A549 (cell line): ENCODE measurements at regions of chr20 and their contacts with region 1.

Region 1: DNA sequence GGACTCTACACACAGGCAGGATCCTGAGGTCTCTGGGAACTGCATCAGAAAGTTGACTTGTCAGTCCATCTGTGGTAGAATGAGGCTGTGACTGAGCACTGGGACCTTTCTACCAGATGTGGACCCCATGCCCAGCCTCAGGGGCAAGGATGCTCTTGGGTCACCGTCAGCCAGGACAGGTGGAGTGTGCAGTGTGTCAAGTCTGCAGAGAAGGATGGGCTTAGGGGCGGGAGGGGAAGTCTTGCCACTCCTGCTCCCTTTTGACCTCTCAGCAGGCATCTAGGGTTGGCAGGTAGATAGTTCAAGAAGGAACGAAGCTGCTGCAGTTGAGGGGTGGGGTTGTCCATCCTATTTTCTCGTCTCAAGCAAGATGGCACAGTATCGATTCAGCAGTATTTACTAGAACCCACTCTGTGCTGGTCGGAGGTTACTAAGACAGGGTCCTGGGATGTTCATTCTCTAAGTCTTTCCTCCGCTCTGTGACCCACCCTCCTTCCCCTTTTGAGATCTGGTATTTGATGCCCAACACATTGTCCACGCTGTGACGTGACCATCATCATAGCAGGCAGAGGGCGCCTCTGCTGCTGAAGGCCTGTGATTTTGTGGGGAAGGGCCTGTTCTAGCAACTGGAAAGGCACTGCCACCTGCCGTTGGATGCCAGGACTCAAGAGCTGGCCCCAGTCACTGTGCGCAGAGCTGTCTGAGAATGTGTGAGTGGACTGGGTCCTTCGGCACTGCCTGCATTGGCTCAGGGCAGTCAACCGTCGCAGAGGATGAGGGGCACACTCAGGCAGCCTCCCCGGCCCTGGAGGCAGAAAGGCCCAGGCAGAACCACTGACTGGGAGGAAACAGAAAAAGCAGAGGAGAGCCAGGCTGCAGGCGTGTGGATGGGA is 23.2 kb downstream of the RBCK1 start:
- DNase-seq: peak; percentile 94 to 95
- ATAC-seq: peak; percentile 70 to 93
- H3K4me3 ChIP-seq: no peak overlapping the region
- H3K27ac ChIP-seq: peak overlapping the region; percentile 27 to 73; a peak in 5 of 6 replicates
- H3K4me1 ChIP-seq: peaks cover 16% of the 10 kb centered on the region
- CTCF ChIP-seq: peak; percentile 99
- EP300 ChIP-seq: no peak
- POLR2A ChIP-seq: no peak
- RAD21 ChIP-seq: peak; percentile 95 to 98

Region 2: GRCh38 chr20:407133-407952 is 23.9 kb before region 1 on chr20:
- CTCF ChIA-PET with region 1: interaction called, 31 read pairs
- POLR2A ChIA-PET with region 1: interaction called, 9 read pairs
- DNase-seq: peak; percentile 91
- ATAC-seq: peak; percentile 87
- H3K4me3 ChIP-seq: peak overlapping the region; percentile 48
- H3K27ac ChIP-seq: peak overlapping the region; percentile 93 to 99
- H3K4me1 ChIP-seq: peaks cover 31% of the 10 kb centered on the region
- CTCF ChIP-seq: peak; percentile 47
- EP300 ChIP-seq: no peak
- POLR2A ChIP-seq: peak; percentile 74
- RAD21 ChIP-seq: peak; percentile 26 to 54; a peak in 4 of 5 replicates

Region 3: DNA sequence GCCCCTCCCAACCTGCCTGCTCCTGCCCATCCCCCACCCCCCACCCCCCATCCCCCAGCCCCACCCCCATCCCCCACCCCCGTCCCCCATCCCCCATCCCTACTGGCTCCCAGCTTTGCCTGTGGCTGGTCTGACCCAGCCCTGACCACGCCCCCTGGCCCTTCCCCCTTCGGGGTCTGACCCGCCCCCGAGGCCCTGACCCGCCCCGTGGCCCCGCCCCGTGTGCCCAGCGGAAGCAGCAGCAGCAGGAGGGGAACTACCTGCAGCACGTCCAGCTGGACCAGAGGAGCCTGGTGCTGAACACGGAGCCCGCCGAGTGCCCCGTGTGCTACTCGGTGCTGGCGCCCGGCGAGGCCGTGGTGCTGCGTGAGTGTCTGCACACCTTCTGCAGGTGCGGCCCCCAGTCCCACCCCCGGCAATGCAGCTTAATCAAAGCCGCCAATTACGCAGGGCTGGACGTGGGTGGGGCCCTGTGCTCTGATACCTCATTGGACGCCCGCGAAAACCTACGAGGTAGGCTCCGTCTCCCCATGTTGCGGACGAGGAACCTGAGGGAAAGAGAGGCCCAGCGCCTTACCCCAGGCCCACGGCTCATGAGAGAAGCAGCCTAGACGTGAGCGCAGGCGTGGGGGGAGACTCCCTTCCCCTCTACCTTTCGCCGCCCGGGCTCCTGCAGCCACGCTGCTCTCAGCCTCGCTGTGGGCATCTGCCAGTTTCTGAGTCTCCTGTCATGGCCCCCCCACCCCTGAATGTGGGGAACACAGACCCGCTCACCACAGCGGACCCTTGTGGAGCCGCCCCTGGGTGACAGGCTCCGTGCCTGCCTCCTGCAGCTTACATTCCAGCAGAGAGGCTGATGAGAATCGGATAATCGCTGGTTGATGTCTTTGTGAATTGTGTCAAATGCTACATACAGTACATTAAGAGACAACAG is 10.3 kb before region 1 on chr20:
- CTCF ChIA-PET with region 1: interaction called, 56 read pairs
- POLR2A ChIA-PET with region 1: no interaction called
- DNase-seq: peak; percentile 63 to 70
- ATAC-seq: peak; percentile 11 to 69; a peak in 3 of 6 replicates
- H3K4me3 ChIP-seq: no peak overlapping the region
- H3K27ac ChIP-seq: peak overlapping the region in 1 of 2 experiments; percentile 59; a peak in 3 of 6 replicates
- H3K4me1 ChIP-seq: peaks cover 21% of the 10 kb centered on the region
- CTCF ChIP-seq: no peak
- EP300 ChIP-seq: no peak
- POLR2A ChIP-seq: no peak
- RAD21 ChIP-seq: no peak

Region 4: DNA sequence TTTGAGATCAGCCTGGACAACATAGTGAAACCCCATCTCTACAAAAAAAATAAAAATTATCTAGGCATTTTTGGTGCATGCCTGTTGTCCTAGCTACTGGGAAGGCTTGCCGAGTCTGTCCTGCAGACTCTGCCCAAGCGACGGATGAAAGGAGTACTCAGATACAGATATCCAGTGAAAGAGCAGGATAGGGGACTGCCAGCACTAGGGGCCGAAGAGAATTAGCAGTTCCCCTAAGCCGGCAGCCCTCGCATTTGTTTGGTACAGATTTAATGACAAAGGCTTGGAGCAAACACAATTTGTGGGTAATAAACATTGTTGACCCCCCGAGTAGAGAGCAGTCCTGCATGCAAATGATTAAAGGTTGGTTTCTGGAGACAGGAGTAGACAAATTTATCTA is 36.5 kb after region 1 on chr20:
- CTCF ChIA-PET with region 1: interaction called, 16 read pairs
- POLR2A ChIA-PET with region 1: no interaction called
- DNase-seq: no peak
- ATAC-seq: no peak
- H3K4me3 ChIP-seq: no peak overlapping the region
- H3K27ac ChIP-seq: no peak overlapping the region
- H3K4me1 ChIP-seq: peaks cover 5% of the 10 kb centered on the region; the same call in 2 of the 3 replicates
- CTCF ChIP-seq: no peak
- EP300 ChIP-seq: no peak
- POLR2A ChIP-seq: no peak
- RAD21 ChIP-seq: no peak

Region 5: GRCh38 chr20:478949-479429 is 47.7 kb after region 1 on chr20:
- CTCF ChIA-PET with region 1: interaction called, 50 read pairs
- POLR2A ChIA-PET with region 1: no interaction called
- DNase-seq: peak; percentile 71 to 76
- ATAC-seq: peak; percentile 73 to 81
- H3K4me3 ChIP-seq: no peak overlapping the region
- H3K27ac ChIP-seq: peak overlapping the region in 1 of 2 experiments; percentile 43; a peak in 2 of 6 replicates
- H3K4me1 ChIP-seq: peaks cover 10% of the 10 kb centered on the region; the same call in 2 of the 3 replicates
- CTCF ChIP-seq: peak; percentile 86
- EP300 ChIP-seq: no peak
- POLR2A ChIP-seq: no peak
- RAD21 ChIP-seq: peak; percentile 70 to 71